Left colon (tissue), 2 donors: ENCODE measurements at regions of chr2 and their contacts with region 1.

Region 1: DNA sequence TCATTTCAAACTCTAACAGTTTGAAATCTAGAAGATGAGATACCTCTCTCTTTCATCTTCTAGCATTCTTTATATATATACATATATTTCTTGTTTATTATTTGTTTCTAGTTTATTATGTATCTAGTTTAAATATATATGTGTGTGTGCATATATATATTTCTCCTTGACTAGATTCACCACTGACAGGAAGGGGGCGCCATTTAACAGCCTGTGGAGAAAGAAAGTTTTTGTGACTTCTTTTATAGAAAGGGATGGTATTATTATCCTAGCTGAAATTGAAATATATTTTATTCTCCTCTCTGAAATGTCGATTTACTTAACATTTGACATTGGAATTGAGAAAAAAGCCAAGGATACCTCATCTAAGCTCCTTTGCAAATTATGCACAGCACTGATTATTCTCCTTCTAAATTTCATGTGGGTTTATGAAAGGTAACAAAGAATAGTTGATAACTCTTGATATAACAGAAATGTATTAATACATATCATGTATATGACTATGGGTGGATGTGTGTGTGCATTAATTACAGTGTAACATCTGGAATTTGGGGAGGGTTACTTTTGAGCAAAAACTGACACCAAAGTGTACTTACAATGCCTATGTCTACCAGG is 160.7 kb upstream of the NT5C1B start:
- DNase-seq: peak in 1 of 2 donors; percentile 63
- ATAC-seq: peak; percentile 53

Region 2: DNA sequence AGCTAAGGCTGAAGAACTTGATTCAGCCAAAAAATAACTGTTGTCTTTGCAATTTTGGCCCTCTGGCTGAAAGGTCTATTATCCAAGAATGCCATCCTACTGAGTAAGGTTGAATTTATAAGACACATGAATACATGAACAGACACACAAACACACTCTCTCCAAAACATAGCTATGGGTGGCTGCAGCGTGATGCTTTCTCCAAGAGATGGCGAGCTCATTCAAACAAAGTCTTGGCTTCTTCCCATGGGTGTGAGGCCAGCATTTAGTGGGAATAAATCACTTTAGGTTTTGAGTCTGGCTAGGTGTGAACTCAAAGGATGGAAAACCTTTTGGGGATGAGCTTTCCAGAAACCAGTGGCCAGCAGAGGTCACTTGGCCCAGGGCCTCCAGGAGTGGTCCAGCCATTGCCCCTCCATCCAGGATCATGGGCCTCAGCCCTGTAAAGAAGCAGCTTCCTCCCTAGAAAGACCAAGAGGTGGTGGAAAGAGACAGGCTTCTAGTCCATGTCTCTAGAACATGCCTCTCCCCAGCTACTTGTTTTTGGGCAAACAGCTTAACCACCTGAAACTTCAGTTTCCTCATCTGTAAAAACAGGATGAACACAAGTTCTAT is 619.4 kb after region 1 on chr2:
- intact Hi-C with region 1: loop called (anchors 5 to 10 kb)
- DNase-seq: no peak
- ATAC-seq: peak; percentile 41